ENCODE measurements at regions of chr13 and their contacts with region 1.

Region 1: GRCh38 chr13:91579320-91579719 is 180.9 kb downstream of the GPC5 start:
- DNase-seq: no peak
- ATAC-seq: no peak
- H3K4me3 ChIP-seq: no peak overlapping the region
- H3K4me3 Mint-ChIP-seq: no peak overlapping the region
- H3K27ac ChIP-seq: no peak overlapping the region
- H3K27ac Mint-ChIP-seq: no peak overlapping the region
- H3K4me1 ChIP-seq: no peaks in the 10 kb centered on the region
- H3K4me1 Mint-ChIP-seq: no peaks in the 10 kb centered on the region
- H3K27me3 ChIP-seq: no peaks in the 10 kb centered on the region
- H3K27me3 Mint-ChIP-seq: no peaks in the 10 kb centered on the region
- CTCF ChIP-seq: no peak

Region 2: GRCh38 chr13:91618315-91618714 is 39.0 kb after region 1 on chr13:
- CTCF ChIA-PET with region 1: no interaction called
- POLR2A ChIA-PET with region 1: no interaction called
- intact Hi-C with region 1: loop called in 1 of 2 experiments (anchors 1 kb)
- DNase-seq: no peak
- ATAC-seq: no peak
- H3K4me3 ChIP-seq: no peak overlapping the region
- H3K4me3 Mint-ChIP-seq: no peak overlapping the region
- H3K27ac ChIP-seq: no peak overlapping the region
- H3K27ac Mint-ChIP-seq: no peak overlapping the region
- H3K4me1 ChIP-seq: no peaks in the 10 kb centered on the region
- H3K4me1 Mint-ChIP-seq: no peaks in the 10 kb centered on the region
- H3K27me3 ChIP-seq: no peaks in the 10 kb centered on the region
- H3K27me3 Mint-ChIP-seq: no peaks in the 10 kb centered on the region
- CTCF ChIP-seq: no peak

Region 3: DNA sequence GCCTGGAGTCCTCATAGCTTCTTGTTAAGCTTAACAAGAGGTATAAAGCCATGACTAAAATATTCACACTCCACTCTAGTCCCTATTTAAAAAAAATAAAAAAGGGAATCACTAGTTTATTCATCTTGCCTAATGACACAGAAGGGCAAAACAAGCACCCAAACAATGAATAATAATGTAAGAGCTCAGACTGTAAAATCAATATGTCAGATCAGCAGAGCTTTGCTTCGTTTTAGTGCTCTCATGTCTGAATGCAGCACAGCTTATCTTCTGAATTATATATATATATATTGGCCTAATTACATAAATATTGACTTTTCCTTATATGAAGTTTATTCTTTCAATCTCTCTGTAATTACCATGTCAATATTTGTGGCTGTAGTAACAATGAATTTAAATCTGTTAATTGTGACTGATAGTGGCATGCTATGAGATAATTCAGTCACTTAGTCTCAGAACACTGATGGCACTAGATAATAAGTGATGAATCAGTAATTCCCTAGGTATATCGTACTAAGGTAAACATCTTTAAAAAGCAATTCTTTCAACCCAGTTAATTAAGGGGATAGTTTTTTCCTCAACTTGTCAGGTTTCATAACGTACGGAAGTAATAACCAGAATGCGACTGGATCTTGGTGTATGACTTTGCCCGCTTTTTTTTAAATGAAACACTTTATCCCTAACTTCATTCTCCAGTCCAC is 1285.4 kb after region 1 on chr13:
- CTCF ChIA-PET with region 1: no interaction called
- POLR2A ChIA-PET with region 1: no interaction called
- intact Hi-C with region 1: no loop called
- DNase-seq: no peak
- ATAC-seq: no peak
- H3K4me3 ChIP-seq: no peak overlapping the region
- H3K4me3 Mint-ChIP-seq: no peak overlapping the region
- H3K27ac ChIP-seq: no peak overlapping the region
- H3K27ac Mint-ChIP-seq: no peak overlapping the region
- H3K4me1 ChIP-seq: no peaks in the 10 kb centered on the region
- H3K4me1 Mint-ChIP-seq: no peaks in the 10 kb centered on the region
- H3K27me3 ChIP-seq: no peaks in the 10 kb centered on the region
- H3K27me3 Mint-ChIP-seq: no peaks in the 10 kb centered on the region
- CTCF ChIP-seq: no peak